Panc1 (cell line): ENCODE measurements at regions of chr10 and their contacts with region 1.

Region 1: DNA sequence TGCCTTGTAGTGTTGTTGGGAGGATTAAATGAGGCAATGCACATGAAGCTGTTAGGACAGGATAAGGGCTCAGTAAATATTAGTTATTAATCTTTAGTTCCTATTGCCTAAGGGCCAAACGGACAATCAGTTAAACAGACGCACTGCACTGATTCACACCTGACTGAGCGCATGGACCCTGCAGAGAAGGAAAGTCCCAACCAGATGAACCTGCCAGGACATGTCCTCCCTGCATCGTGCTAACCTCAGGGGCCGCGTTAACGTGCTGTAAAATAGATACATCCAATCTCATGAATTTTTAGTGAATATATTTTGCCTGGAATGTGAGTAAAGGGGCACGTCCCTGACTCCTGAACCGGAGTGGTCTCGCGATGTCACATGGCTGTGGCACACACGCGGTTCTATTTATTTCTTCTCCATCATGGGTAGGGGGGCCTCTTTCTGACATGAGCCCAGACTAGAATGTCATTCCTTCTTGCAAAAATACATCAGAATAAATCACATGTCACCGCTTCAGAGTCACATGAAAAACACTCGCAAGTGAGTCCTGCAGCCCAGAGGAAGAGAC is 12.3 kb downstream of the ADARB2 start:
- DNase-seq: no peak
- ATAC-seq: no peak
- H3K4me3 ChIP-seq: no peak overlapping the region
- H3K27ac ChIP-seq: no peak overlapping the region
- H3K4me1 ChIP-seq: no peaks in the 10 kb centered on the region
- H3K27me3 ChIP-seq: no peaks in the 10 kb centered on the region; the same call in 1 of the 2 replicates
- CTCF ChIP-seq: no peak

Region 2: DNA sequence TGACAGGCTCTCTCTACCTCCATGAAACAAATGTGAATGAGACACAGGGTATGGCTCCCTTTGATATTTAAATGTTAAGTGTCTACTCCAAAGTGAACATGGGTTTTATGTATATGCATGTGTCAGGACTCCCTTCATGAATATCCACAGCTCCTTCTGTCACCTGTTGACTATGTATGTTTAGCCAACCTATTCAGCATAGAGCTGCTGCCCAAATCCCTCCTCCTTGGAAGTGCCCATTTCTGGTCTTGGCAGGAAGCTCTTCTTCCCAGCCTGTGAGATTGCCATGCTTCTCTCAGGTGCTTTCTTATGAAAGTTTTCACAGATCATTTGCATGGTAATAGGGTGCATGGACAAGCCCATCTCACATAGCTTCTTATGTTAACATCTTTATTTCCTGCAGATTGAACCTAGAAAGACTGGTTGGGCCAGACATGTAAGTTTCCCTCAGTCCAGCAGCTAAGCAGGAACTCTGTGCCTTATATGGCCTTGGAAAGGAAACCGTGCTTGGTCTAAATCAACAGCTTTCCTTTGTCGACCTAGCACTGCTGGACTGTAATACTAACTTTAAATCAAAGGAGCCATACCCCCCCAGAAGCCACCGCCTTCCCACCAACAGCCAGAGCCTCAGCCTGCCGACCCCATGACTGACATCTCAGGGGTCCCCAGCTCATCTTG is 276.6 kb before region 1 on chr10:
- CTCF ChIA-PET with region 1: no interaction called
- POLR2A ChIA-PET with region 1: no interaction called
- in situ Hi-C with region 1: no loop called
- intact Hi-C with region 1: no loop called
- DNase-seq: no peak
- ATAC-seq: no peak
- H3K4me3 ChIP-seq: no peak overlapping the region
- H3K27ac ChIP-seq: no peak overlapping the region
- H3K4me1 ChIP-seq: no peaks in the 10 kb centered on the region
- H3K27me3 ChIP-seq: no peaks in the 10 kb centered on the region; the same call in 1 of the 2 replicates
- CTCF ChIP-seq: no peak

Region 3: DNA sequence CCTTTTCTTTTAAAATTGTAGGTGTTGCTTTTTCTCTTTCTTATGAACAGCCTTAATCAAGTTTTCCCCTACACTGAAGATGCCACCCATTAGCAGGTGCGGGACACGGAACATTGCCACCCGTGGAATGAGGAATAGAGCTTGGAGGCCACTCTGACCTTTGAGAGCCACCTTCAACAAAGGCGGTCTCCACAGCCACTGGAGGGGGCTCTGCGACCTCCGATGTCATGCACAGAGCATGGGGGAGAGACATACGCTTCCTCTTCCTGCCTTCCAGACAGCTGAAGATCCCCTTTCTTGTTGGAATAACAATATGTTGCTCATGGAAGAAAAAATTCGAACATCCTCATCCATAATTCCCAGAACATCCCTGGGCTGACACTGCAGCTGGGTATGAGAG is 26.8 kb before region 1 on chr10:
- CTCF ChIA-PET with region 1: no interaction called
- POLR2A ChIA-PET with region 1: no interaction called
- in situ Hi-C with region 1: no loop called
- intact Hi-C with region 1: loop called (anchors 1 kb)
- DNase-seq: no peak
- ATAC-seq: no peak
- H3K4me3 ChIP-seq: no peak overlapping the region
- H3K27ac ChIP-seq: no peak overlapping the region
- H3K4me1 ChIP-seq: no peaks in the 10 kb centered on the region
- H3K27me3 ChIP-seq: no peaks in the 10 kb centered on the region
- CTCF ChIP-seq: no peak

Region 4: GRCh38 chr10:1709161-1709560 is 15.8 kb before region 1 on chr10:
- CTCF ChIA-PET with region 1: no interaction called
- POLR2A ChIA-PET with region 1: no interaction called
- in situ Hi-C with region 1: no loop called
- intact Hi-C with region 1: no loop called
- DNase-seq: no peak
- ATAC-seq: no peak
- H3K4me3 ChIP-seq: no peak overlapping the region
- H3K27ac ChIP-seq: no peak overlapping the region
- H3K4me1 ChIP-seq: no peaks in the 10 kb centered on the region
- H3K27me3 ChIP-seq: no peaks in the 10 kb centered on the region
- CTCF ChIP-seq: no peak